Lower lobe of right lung (tissue), 2 donors: ENCODE measurements at regions of chr1 and their contacts with region 1.

Region 1: GRCh38 chr1:112803906-112804762 is 89.0 kb upstream of the PPM1J start:
- DNase-seq: peak; percentile 76
- ATAC-seq: peak; percentile 89 to 93
- H3K4me3 ChIP-seq: no peak overlapping the region
- H3K27ac ChIP-seq: no peak overlapping the region
- H3K4me1 ChIP-seq: no peaks in the 10 kb centered on the region
- H3K27me3 ChIP-seq: peaks cover 8% of the 10 kb centered on the region
- CTCF ChIP-seq: peak; percentile 72

Region 2: GRCh38 chr1:112715264-112716053 is 88.7 kb before region 1 on chr1 and contains the start of gene PPM1J:
- intact Hi-C with region 1: loop called (anchors 5 kb)
- DNase-seq: peak; percentile 99
- ATAC-seq: peak; percentile 93 to 94
- H3K4me3 ChIP-seq: peak within 1 kb of the TSS; percentile 66
- H3K27ac ChIP-seq: peak within 1 kb of the TSS; percentile 44
- H3K4me1 ChIP-seq: peaks cover 27% of the 10 kb centered on the region
- H3K27me3 ChIP-seq: no peaks in the 10 kb centered on the region
- CTCF ChIP-seq: no peak
- total RNA-seq, gene PPM1J: 0.30 TPM